Aorta (tissue), 5 donors: ENCODE measurements at regions of chr9 and their contacts with region 1.

Region 1: GRCh38 chr9:134163353-134164196 is 789 bp downstream of the RNU6ATAC start:
- DNase-seq: peak; percentile 81 to 89
- ATAC-seq: no peak
- H3K4me3 ChIP-seq: no peak overlapping the region
- H3K27ac ChIP-seq: peak overlapping the region; percentile 57 to 72
- H3K4me1 ChIP-seq: no peaks in the 10 kb centered on the region
- H3K27me3 ChIP-seq: no peaks in the 10 kb centered on the region

Region 2: GRCh38 chr9:134135343-134136118 is 28.0 kb before region 1 on chr9 and contains the start of gene WDR5:
- intact Hi-C with region 1: loop called in 1 of 2 experiments (anchors 2 kb)
- DNase-seq: peak; percentile 96 to 98
- ATAC-seq: peak; percentile 96
- H3K4me3 ChIP-seq: peak within 1 kb of the TSS; percentile 89 to 97
- H3K27ac ChIP-seq: peak within 1 kb of the TSS in 1 of 2 donors; percentile 81
- H3K4me1 ChIP-seq: no peaks in the 10 kb centered on the region
- H3K27me3 ChIP-seq: no peaks in the 10 kb centered on the region
- total RNA-seq, gene WDR5: 15.4 to 25.1 TPM

Region 3: DNA sequence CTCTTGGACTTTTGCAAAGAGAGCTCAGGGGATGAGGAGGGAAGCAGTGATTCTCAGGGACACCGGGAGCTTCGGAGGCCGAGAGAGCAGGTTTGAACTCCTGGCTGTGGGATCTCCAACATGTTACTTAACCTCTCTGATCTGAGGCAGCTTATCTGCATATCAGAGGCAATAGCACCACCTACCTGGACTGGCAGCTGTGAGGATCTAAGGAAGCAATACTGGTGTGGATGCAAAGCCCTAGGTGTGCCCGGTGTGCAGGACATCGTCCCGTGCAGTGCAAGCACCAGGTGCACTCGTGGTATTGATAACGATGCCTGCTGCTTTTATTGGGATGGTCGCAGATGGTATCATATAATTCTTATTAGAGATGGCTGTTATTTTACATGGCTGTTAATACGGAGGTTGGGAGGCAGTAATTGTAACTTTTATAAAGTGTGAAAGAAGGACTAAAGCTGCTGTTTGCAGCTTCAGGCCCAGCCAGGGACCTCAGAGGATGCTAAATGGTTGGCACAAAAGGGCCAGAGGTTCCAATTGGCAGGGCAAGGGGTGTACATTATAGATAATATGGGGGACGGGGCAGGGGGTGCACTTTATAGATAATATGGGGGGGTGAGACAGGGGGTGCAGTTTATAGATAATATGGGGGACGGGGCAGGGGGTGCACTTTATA is 492.9 kb after region 1 on chr9:
- intact Hi-C with region 1: loop called in 1 of 2 experiments (anchors 10 kb)
- DNase-seq: peak in 1 of 2 donors; percentile 10
- ATAC-seq: no peak
- H3K4me3 ChIP-seq: no peak overlapping the region
- H3K27ac ChIP-seq: no peak overlapping the region
- H3K4me1 ChIP-seq: no peaks in the 10 kb centered on the region
- H3K27me3 ChIP-seq: no peaks in the 10 kb centered on the region